HepG2 (cell line): ENCODE measurements at regions of chr2 and their contacts with region 1.

Region 1: DNA sequence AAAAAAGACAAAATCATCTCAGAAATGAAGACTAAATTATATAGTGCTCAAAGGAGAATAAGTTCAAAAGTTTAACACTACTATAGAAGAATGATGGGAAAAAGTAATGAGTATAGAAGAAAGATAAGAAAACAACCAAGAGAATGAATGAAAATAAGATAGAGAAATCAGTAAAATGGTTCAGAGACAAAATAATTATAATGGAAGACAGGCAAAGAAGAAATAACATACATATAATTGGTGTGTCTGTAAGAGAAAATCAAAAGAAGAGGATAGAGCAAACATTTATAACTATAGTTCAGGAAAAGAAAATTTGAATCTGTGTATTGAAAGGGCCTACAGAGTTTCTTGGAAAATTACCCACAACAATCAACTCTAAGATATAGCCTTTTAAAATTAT is 43.5 kb downstream of the DNAH6 start:
- DNase-seq: no peak
- ATAC-seq: no peak
- H3K4me3 ChIP-seq: no peak overlapping the region
- H3K27ac ChIP-seq: no peak overlapping the region
- H3K4me1 ChIP-seq: no peaks in the 10 kb centered on the region
- H3K27me3 ChIP-seq: no peaks in the 10 kb centered on the region
- CTCF ChIP-seq: no peak
- EP300 ChIP-seq: no peak
- POLR2A ChIP-seq: no peak
- RAD21 ChIP-seq: no peak

Region 2: GRCh38 chr2:84319581-84319980 is 240.3 kb before region 1 on chr2:
- CTCF ChIA-PET with region 1: no interaction called
- POLR2A ChIA-PET with region 1: no interaction called
- in situ Hi-C with region 1: no loop called
- intact Hi-C with region 1: no loop called
- DNase-seq: no peak
- ATAC-seq: no peak
- H3K4me3 ChIP-seq: no peak overlapping the region
- H3K27ac ChIP-seq: no peak overlapping the region
- H3K4me1 ChIP-seq: no peaks in the 10 kb centered on the region
- H3K27me3 ChIP-seq: no peaks in the 10 kb centered on the region
- CTCF ChIP-seq: no peak
- EP300 ChIP-seq: no peak
- POLR2A ChIP-seq: no peak
- RAD21 ChIP-seq: no peak

Region 3: DNA sequence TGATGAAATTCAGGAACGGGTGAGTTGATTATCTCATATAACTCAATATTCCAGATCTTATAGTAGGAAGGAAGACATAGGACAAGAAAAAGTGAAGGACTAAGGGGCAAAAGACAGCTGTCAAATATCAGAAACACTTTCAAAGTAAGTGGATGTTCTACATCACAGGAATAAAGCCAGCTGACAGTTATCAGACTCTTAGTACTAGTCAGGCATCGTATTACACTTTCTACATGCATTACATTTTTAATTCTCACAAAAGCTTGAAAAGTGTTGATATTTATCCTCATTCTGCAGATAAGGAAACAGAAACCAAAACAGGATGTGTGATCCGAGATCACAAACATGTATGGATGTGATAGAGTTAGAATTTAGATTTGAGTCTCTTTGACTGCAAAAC is 19.8 kb after region 1 on chr2:
- CTCF ChIA-PET with region 1: no interaction called
- POLR2A ChIA-PET with region 1: no interaction called
- in situ Hi-C with region 1: no loop called
- intact Hi-C with region 1: loop called (anchors 1 kb)
- DNase-seq: no peak
- ATAC-seq: no peak
- H3K4me3 ChIP-seq: no peak overlapping the region
- H3K27ac ChIP-seq: no peak overlapping the region
- H3K4me1 ChIP-seq: no peaks in the 10 kb centered on the region
- H3K27me3 ChIP-seq: no peaks in the 10 kb centered on the region
- CTCF ChIP-seq: no peak
- EP300 ChIP-seq: no peak
- POLR2A ChIP-seq: no peak
- RAD21 ChIP-seq: no peak

Region 4: DNA sequence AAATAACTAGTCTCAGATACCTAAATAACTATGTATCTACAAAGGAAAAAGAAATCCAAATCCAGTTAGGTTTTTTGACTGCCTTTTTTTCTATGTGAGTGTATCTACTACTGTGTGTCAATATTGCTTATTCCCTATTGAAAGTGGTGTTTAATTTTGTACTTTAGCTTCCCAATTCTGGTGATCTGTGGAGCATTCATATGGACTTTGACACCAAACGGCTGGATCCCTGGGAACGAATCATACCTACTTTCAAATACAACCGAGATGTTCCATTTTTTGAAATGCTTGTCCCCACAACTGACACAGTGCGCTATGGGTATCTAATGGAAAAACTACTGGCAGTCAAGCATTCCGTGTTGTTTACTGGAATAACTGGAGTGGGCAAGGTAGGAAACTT is 109.3 kb after region 1 on chr2:
- CTCF ChIA-PET with region 1: no interaction called
- POLR2A ChIA-PET with region 1: no interaction called
- in situ Hi-C with region 1: no loop called
- intact Hi-C with region 1: no loop called
- DNase-seq: no peak
- ATAC-seq: no peak
- H3K4me3 ChIP-seq: no peak overlapping the region
- H3K27ac ChIP-seq: no peak overlapping the region
- H3K4me1 ChIP-seq: no peaks in the 10 kb centered on the region
- H3K27me3 ChIP-seq: no peaks in the 10 kb centered on the region; a peak in 1 of 5 replicates
- CTCF ChIP-seq: no peak
- EP300 ChIP-seq: no peak
- POLR2A ChIP-seq: no peak
- RAD21 ChIP-seq: no peak

Region 5: DNA sequence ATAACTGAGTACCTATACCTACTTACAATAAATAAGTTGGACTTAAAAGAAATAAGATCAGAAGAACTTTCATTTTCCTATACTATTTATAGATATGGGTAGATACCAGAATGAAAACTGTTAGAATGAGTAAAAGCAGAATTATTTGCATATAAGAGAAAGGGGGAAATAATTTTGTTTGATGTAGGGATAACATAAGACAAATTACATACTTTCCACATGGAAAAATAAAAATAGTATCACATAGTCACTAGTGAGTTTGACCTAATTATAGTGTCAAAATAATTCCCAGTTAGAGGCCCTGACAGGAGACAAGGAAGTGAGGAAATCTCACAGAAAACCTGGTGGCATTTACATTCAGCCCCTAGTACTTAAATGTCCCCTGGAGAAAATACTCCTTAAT is 439.7 kb after region 1 on chr2:
- CTCF ChIA-PET with region 1: no interaction called
- POLR2A ChIA-PET with region 1: no interaction called
- in situ Hi-C with region 1: no loop called
- intact Hi-C with region 1: no loop called
- DNase-seq: no peak
- ATAC-seq: no peak
- H3K4me3 ChIP-seq: no peak overlapping the region
- H3K27ac ChIP-seq: no peak overlapping the region
- H3K4me1 ChIP-seq: no peaks in the 10 kb centered on the region
- H3K27me3 ChIP-seq: no peaks in the 10 kb centered on the region
- CTCF ChIP-seq: no peak
- EP300 ChIP-seq: no peak
- POLR2A ChIP-seq: no peak
- RAD21 ChIP-seq: no peak

Region 6: DNA sequence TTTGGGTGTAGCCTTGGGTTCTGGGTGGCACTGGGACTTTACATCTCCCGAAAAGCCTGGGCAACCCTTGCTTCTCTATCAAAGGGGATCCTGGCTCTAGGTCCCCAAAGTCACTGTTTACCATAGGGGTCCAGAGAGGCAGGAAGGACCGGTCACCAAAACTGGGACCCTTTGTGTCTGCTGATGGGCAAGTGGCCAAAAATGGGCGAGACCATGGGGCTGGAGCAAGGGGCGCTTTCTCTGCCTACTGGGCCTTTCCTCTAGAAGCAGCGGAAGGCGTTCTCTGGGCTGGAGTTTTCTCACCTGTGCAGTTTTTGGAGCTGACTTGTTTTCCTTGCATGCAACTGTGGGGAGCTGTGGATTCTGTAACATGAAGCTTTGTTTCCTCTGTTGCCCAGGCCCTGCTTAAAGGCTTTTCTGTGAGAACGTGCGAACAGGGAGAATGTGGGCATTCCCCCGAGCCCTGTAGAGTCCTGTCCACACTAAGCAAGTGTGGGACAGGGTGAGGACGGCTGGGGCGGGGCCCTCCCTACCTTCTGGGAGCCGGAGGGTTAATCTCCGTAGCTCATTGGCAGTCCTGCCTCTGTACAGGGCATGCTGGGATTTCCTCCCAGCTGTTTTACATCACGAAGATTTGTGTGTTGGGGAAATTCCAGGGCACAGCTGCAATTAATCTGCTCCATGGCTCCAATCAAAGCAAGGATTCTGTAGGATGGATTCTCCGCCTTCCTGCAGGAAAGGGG is 717.7 kb after region 1 on chr2:
- CTCF ChIA-PET with region 1: no interaction called
- POLR2A ChIA-PET with region 1: no interaction called
- in situ Hi-C with region 1: no loop called
- intact Hi-C with region 1: no loop called
- DNase-seq: no peak
- ATAC-seq: no peak
- H3K4me3 ChIP-seq: no peak overlapping the region
- H3K27ac ChIP-seq: no peak overlapping the region
- H3K4me1 ChIP-seq: peaks cover 25% of the 10 kb centered on the region
- H3K27me3 ChIP-seq: peaks cover 7 to 67% of the 10 kb centered on the region in 2 experiments
- CTCF ChIP-seq: no peak
- EP300 ChIP-seq: no peak
- POLR2A ChIP-seq: no peak
- RAD21 ChIP-seq: no peak